Psoas muscle (tissue), 8 donors: ENCODE measurements at regions of chr16 and their contacts with region 1.

Region 1: GRCh38 chr16:75471723-75472633 is 7.5 kb upstream of the TMEM170A start:
- DNase-seq: no peak
- ATAC-seq: peak; percentile 88 to 99 (median 94)
- H3K4me3 ChIP-seq: no peak overlapping the region
- H3K27ac ChIP-seq: no peak overlapping the region
- H3K4me1 ChIP-seq: no peaks in the 10 kb centered on the region
- H3K27me3 ChIP-seq: no peaks in the 10 kb centered on the region
- CTCF ChIP-seq: peak; percentile 83

Region 2: GRCh38 chr16:75764154-75764768 is 292.3 kb after region 1 on chr16:
- intact Hi-C with region 1: loop called in 1 of 2 experiments (anchors 5 kb)
- DNase-seq: no peak
- ATAC-seq: peak; percentile 46 to 83 (median 74)
- H3K4me3 ChIP-seq: no peak overlapping the region
- H3K27ac ChIP-seq: no peak overlapping the region
- H3K4me1 ChIP-seq: no peaks in the 10 kb centered on the region
- H3K27me3 ChIP-seq: no peaks in the 10 kb centered on the region
- CTCF ChIP-seq: peak; percentile 62